Vagina (tissue), 2 donors: ENCODE measurements at regions of chr3 and their contacts with region 1.

Region 1: DNA sequence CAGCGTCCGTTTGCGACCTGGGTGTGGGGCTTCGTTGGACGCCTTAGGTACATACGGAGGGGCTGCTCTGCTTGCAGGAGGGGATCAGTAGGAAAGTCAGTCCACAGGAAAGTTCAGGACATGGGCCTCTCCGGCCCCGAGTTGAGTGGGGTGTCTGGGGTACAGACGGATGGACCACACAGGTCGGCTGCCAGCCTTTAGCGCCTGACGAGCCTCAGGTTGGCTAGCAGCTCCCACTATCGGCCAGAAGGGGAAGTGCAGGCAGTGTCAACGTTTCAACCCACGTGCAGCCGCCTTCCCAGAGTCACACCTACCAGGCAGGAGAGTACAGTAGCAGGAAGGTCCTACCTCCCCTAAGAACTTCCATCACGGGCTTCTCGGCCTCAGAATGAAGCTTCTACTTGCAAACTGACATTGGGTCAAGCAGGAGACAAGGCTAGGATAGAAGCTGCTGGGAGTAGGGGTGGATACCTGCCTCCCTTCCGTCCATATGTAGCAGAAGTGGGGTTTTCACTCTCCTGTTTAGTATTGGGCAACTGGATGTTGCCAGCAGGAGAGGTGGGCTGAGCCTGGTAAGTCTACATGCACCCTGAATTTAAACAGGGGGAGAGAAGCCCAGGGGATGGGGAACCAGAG is 1.8 kb upstream of the SCN5A start:
- DNase-seq: peak in 1 of 2 donors; percentile 88
- H3K4me3 ChIP-seq: no peak overlapping the region
- H3K27ac ChIP-seq: no peak overlapping the region
- H3K4me1 ChIP-seq: peaks cover 4% of the 10 kb centered on the region
- H3K27me3 ChIP-seq: no peaks in the 10 kb centered on the region
- CTCF ChIP-seq: peak; percentile 85 to 91 (median 88)
- POLR2A ChIP-seq: no peak

Region 2: DNA sequence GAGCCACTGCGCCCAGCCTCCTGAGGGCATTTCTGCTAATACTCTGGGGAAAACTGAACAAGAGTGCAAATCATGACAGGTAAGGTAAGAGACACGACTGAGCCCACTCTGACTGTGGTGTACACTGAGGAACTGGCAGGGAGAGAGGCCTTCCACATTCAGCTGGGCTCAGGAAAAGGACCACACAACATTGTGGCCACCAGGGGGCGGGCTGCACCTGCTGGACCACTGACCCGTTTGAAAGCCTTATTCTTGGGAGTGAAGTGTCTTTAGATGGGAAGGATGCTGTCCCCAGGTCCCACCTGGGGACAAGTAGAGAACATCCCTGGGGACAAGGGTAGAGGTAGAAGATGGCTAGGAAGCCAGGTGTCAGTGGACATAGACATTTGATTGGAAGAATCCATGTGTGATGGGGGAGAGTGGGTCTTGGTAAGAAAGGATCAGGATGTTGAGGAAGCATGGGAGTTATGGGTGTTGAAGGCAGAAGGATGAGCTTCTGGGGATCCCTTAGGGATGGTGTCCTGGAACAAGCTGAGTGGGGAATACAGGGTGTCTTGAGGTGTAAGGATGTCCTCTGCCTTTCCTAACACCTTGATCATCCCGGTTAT is 795.8 kb before region 1 on chr3:
- intact Hi-C with region 1: no loop called
- DNase-seq: no peak
- H3K4me3 ChIP-seq: no peak overlapping the region
- H3K27ac ChIP-seq: no peak overlapping the region
- H3K4me1 ChIP-seq: peaks cover 27% of the 10 kb centered on the region
- H3K27me3 ChIP-seq: no peaks in the 10 kb centered on the region
- CTCF ChIP-seq: peak; percentile 82 to 95 (median 93)
- POLR2A ChIP-seq: no peak

Region 3: DNA sequence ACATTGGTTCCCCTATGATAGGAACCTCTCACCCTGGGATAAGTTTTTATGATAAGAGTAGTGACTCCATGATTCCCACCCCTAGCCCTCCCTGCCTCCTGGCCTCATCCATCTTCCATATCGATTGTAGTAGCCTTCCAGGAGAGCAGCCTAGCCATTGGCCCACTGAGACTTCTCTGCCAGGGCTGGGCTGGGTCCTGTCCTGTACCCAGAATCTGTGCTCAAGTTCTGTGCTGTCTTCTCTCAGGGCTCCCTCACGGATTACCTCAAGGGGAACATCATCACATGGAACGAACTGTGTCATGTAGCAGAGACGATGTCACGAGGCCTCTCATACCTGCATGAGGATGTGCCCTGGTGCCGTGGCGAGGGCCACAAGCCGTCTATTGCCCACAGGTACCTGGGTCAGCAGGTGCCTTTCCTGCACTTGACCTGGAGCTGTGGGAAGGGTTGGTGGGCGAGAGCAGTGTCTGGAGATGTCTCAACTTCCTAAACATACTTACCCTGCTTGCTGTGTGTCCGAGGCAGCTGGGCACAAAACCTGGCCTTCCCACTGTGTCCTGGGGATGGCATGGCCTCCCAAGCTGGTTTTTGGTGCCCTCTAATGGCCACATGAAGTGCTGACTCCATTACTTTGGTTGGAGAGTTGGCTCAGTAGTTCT is 171.7 kb before region 1 on chr3:
- intact Hi-C with region 1: no loop called
- DNase-seq: peak in 1 of 2 donors; percentile 83
- H3K4me3 ChIP-seq: no peak overlapping the region
- H3K27ac ChIP-seq: no peak overlapping the region
- H3K4me1 ChIP-seq: peaks cover 5% of the 10 kb centered on the region
- H3K27me3 ChIP-seq: no peaks in the 10 kb centered on the region
- CTCF ChIP-seq: peak; percentile 69 to 74 (median 73)
- POLR2A ChIP-seq: no peak

Region 4: DNA sequence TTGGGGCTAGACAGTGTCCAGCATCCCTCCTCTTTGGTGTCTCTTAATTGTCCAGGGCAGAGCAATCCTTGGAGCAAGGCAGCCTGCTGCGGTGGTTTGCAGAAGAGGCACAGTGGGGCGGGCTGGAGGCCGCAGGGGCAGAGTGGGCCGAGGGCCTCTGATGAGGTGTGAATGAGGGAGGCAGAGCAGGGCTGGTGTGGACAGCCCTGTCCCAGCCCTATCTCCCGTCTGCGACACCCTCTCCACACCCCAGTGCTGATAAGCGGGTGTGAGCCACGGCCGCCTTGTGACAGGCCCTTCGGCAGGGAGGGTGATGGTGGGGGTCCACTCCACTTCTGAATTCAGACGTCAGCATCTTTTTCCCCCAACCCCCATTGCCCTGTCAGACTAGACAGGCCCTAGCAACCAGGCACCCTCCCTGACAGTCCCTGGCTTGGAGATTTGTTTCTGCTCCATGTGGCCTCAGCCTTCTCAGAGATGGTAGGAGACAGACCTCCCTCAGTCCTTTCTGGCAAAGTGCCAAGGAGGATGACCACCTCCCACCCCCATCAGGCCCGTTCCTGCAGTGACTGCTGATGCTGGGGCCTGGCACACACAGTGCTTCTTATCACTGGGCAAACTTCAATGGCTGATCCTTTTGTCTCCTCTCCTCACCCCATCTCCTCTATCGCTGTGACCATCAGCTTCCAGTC is 117.8 kb before region 1 on chr3:
- intact Hi-C with region 1: loop called (anchors 10 kb)
- DNase-seq: peak in 1 of 2 donors; percentile 67
- H3K4me3 ChIP-seq: no peak overlapping the region
- H3K27ac ChIP-seq: no peak overlapping the region
- H3K4me1 ChIP-seq: no peaks in the 10 kb centered on the region
- H3K27me3 ChIP-seq: no peaks in the 10 kb centered on the region
- CTCF ChIP-seq: no peak
- POLR2A ChIP-seq: no peak